ENCODE measurements at regions of chr2 and their contacts with region 1.

Region 1: GRCh38 chr2:16069933-16070647 is 129.7 kb downstream of the MYCN start:
- DNase-seq: peak; percentile 91
- ATAC-seq: peak; percentile 77
- H3K4me3 ChIP-seq: peak overlapping the region; percentile 33 to 66 (median 35)
- H3K27ac ChIP-seq: peak overlapping the region; percentile 75
- H3K4me1 ChIP-seq: peaks cover 66% of the 10 kb centered on the region
- H3K27me3 ChIP-seq: no peaks in the 10 kb centered on the region
- CTCF ChIP-seq: no peak
- EP300 ChIP-seq: peak in 1 of 2 experiments; percentile 76; a peak in 3 of 4 replicates
- POLR2A ChIP-seq: peak in 1 of 2 experiments; percentile 59; a peak in 3 of 4 replicates
- RAD21 ChIP-seq: no peak

Region 2: DNA sequence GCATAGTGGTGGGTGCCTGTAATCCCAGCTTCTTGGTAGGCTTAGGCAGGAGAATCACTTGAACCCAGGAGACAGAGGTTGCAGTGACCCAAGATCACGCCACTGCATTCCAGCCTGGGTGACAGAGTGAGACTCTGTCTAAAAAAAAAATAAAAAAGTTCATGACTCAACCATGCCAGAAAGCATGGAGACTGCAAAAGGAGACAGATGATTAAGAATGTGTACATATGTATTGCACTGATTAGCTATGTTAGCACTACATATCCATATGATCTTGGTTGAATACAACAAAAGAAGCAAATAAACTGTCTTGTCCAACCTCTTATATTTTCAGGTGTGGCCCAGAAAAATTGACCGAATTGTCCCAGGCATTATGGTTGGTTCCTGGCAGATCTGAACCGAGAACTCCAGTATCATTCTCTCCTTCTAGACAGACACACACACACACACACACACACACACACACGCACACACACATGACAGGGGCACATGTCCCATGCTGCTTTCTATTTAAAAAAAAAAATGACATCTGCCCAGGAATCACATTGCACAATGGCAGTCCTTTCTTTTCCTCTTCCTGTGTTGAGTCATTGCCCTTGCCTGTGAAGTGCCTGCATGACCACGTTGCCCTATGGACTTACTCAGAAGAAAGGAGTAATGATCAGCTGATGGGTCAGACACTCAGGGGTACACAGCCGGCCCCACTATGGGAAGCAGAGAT is 64.1 kb before region 1 on chr2:
- CTCF ChIA-PET with region 1: no interaction called
- POLR2A ChIA-PET with region 1: no interaction called
- in situ Hi-C with region 1: no loop called
- intact Hi-C with region 1: loop called (anchors 1 kb)
- DNase-seq: peak; percentile 73
- ATAC-seq: peak; percentile 90
- H3K4me3 ChIP-seq: no peak overlapping the region
- H3K27ac ChIP-seq: no peak overlapping the region
- H3K4me1 ChIP-seq: peaks cover 18% of the 10 kb centered on the region
- H3K27me3 ChIP-seq: no peaks in the 10 kb centered on the region; a peak in 1 of 5 replicates
- CTCF ChIP-seq: no peak
- EP300 ChIP-seq: peak; percentile 34 to 67; a peak in 2 of 4 replicates
- POLR2A ChIP-seq: no peak
- RAD21 ChIP-seq: no peak

Region 3: GRCh38 chr2:16050908-16051489 is 19.1 kb before region 1 on chr2:
- CTCF ChIA-PET with region 1: no interaction called
- POLR2A ChIA-PET with region 1: interaction called, 20 read pairs
- in situ Hi-C with region 1: no loop called
- intact Hi-C with region 1: loop called (anchors 2 kb)
- DNase-seq: peak; percentile 80
- ATAC-seq: peak; percentile 97
- H3K4me3 ChIP-seq: no peak overlapping the region
- H3K27ac ChIP-seq: no peak overlapping the region
- H3K4me1 ChIP-seq: peaks cover 31% of the 10 kb centered on the region
- H3K27me3 ChIP-seq: peaks cover 2 to 21% of the 10 kb centered on the region in 2 experiments; a peak in 3 of 5 replicates
- CTCF ChIP-seq: no peak
- EP300 ChIP-seq: 0 out of 4 replicates have a peak, but pooled peaks of 1 of the 2 experiments have one; percentile 17
- POLR2A ChIP-seq: no peak
- RAD21 ChIP-seq: no peak

Region 4: GRCh38 chr2:16093639-16094529 is 23.8 kb after region 1 on chr2:
- CTCF ChIA-PET with region 1: no interaction called
- POLR2A ChIA-PET with region 1: interaction called, 6 read pairs
- in situ Hi-C with region 1: no loop called
- intact Hi-C with region 1: loop called (anchors 2 kb)
- DNase-seq: peak; percentile 60
- ATAC-seq: peak; percentile 76
- H3K4me3 ChIP-seq: no peak overlapping the region
- H3K27ac ChIP-seq: no peak overlapping the region
- H3K4me1 ChIP-seq: peaks cover 72% of the 10 kb centered on the region
- H3K27me3 ChIP-seq: no peaks in the 10 kb centered on the region; a peak in 1 of 5 replicates
- CTCF ChIP-seq: peak; percentile 8; the same call in 1 of the 2 replicates
- EP300 ChIP-seq: peak in 1 of 2 experiments; percentile 29; a peak in 1 of 4 replicates
- POLR2A ChIP-seq: no peak
- RAD21 ChIP-seq: no peak

Region 5: DNA sequence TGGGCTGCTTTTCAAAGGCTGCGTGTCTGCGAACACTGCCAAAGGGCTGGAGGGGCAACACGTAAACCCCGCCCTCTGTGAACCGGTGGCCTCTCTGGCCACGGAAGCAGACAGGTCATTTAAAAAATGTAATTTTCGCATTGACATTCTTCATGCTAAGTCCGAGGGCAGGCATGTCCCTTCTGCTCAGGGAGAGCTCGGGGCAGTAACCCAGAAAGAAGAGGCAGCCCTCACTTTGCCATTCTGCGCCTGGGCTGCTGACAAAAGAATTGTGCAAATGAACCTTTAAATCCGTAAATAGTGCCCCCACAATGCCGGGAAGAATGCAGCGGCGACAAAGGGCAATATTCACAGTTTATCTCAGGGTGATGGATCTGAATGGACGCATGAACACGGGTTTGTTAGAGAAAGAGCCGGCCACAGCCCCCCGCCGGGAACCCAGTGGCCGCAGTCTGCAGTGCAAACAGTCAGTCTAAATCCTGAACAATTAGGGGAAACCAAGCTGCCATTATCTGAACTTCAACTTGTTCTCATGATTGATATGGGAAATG is 96.4 kb after region 1 on chr2:
- CTCF ChIA-PET with region 1: no interaction called
- POLR2A ChIA-PET with region 1: no interaction called
- in situ Hi-C with region 1: no loop called
- intact Hi-C with region 1: no loop called
- DNase-seq: no peak
- ATAC-seq: peak; percentile 61; the same call in 2 of the 3 replicates
- H3K4me3 ChIP-seq: no peak overlapping the region
- H3K27ac ChIP-seq: no peak overlapping the region
- H3K4me1 ChIP-seq: no peaks in the 10 kb centered on the region
- H3K27me3 ChIP-seq: peaks cover 0 to 20% of the 10 kb centered on the region in 2 experiments; a peak in 2 of 5 replicates
- CTCF ChIP-seq: no peak
- EP300 ChIP-seq: no peak
- POLR2A ChIP-seq: no peak
- RAD21 ChIP-seq: no peak

Region 6: DNA sequence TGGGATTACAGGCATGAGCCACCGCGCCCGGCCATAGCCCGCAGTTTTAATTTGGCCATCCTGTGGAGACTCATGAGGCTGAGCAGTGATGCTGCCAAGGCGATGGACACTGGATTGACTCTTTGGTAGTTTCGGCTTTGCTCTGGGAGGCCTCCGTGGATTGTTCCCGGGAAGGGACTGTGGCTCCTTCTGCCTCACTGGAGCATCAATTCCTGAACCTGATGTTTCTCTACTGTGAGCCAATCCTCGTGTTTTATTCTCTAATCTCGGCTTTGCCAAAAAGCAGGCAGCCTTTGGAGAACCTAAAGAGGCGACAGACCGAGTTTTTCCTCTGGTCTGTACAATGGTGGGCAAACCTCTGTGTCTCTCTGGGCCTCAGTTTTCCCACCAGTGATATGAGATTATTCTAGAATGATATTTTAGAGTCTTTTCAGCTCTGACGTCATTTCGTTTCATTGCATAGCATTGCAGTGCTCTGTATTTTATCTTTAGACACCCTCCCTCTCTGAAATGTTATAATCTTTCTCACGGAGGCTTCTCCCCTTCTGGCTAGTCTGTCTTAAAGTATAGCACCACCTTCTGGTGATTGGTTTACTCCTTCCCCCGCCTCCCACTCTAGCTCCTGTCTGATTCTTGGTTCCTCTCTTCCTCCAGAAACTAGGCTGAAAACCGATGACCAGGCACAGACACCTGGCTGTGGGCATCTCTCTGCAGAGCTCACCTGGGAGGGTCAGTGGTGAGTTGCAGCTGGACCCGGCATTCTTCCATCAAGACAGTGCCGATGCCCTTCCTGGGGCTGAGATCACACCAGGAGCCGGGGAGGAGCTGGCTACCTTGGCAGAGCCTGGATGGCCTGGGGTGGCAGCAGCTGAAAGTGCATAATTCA is 211.6 kb after region 1 on chr2:
- CTCF ChIA-PET with region 1: no interaction called
- POLR2A ChIA-PET with region 1: no interaction called
- in situ Hi-C with region 1: no loop called
- intact Hi-C with region 1: loop called (anchors 5 kb)
- DNase-seq: peak; percentile 41
- ATAC-seq: peak; percentile 86
- H3K4me3 ChIP-seq: no peak overlapping the region
- H3K27ac ChIP-seq: no peak overlapping the region
- H3K4me1 ChIP-seq: no peaks in the 10 kb centered on the region
- H3K27me3 ChIP-seq: peaks cover 1 to 4% of the 10 kb centered on the region in 2 experiments; a peak in 3 of 5 replicates
- CTCF ChIP-seq: peak; percentile 71
- EP300 ChIP-seq: no peak
- POLR2A ChIP-seq: no peak
- RAD21 ChIP-seq: peak; percentile 61; the same call in 1 of the 2 replicates

Measured in HepG2 (cell line).